ENCODE measurements at regions of chr22 and their contacts with region 1.

Region 1: DNA sequence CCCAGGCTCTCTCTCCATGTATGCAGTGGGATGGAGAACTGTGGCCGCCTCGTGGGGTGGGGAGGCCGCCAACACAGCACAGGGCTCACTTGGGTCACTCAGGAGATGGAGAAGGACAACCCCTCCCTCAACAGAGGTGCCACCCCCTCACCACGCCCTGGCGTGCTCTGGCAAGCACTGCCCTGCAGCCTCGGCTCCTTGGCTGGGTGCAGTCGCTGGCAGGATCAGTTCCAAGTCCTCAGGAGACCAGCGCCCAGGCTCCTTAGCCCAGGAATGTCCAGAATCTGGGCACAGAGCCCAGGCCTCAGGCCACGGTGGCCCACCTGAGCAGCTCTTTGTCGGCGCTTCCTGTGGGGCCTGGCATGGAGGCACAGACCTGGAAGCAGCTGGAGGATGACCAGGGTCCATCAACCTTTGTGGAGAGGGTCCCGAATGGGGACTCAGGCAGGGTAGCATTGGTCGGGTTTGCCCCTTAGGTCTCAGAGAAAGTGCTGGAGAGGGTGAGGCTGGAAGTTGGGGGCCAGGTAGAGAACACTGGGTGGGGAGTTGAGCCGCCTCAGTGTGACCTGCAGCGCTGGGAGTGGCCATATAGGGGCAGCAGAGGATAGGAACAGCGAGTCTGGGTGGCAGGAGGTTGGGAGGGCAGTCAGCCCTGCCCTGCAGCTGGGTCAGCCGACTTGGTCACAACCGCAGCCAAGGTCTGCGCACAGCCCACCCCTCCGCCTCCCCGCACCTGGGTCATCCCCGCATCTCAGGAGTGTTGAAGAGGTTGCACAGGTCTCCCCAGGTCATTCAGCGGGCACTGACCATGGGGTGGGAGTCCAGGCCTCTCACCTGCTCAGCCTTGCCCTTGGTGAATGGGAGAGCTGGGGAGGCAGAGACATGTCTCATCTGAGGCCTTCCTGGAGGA is 8.2 kb downstream of the SUSD2 start:
- H3K4me3 Mint-ChIP-seq: no peak overlapping the region
- H3K27ac Mint-ChIP-seq: peak overlapping the region; percentile 78
- H3K4me1 Mint-ChIP-seq: peaks cover 41% of the 10 kb centered on the region
- H3K27me3 Mint-ChIP-seq: no peaks in the 10 kb centered on the region

Region 2: DNA sequence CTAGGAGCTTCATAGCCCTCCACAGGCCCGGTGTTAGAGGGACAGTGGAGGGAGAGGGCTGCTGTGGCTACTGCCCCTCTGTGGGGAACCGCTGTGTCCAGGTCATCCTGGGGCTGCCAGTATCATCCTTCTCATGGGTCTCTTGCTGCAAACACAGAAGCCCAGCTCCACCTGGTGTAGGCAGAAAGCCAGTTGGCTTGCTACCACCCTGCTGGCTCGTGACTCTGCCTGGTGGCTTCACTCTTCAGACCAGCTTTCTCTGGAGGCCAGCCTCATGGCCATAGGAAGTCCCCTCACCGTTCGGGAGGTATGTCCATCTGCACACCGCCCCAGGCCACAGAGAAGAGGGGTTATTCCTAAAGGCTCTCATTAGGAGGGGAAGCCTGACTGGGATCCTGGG is 27.6 kb before region 1 on chr22:
- intact Hi-C with region 1: no loop called
- H3K4me3 Mint-ChIP-seq: no peak overlapping the region
- H3K27ac Mint-ChIP-seq: peak overlapping the region; percentile 36
- H3K4me1 Mint-ChIP-seq: peaks cover 51% of the 10 kb centered on the region
- H3K27me3 Mint-ChIP-seq: no peaks in the 10 kb centered on the region

Region 3: DNA sequence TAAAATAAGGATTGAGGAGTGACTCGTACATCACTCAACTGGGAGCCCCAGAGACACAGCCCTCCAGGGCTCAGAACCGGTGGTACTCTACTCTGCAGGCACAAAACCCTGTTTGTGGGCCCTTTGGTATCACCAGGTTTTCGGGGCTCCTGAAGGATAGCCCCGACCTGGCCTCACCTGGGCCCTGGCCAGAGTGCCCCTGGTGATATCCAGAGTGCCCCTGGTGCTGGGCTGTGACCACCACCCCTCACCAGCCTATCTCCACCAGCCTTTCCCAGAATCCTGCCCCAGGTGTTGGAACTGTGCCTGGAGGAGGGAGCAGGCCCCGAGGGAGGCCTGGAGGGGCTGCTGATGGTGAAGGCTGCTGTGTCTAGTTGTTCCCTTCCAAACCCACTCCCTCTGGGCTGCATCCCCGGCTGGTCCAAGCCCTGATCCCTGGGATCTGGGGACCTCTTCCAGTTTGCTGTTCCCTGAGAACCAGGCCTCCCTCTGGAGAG is 57.6 kb after region 1 on chr22:
- intact Hi-C with region 1: loop called (anchors 2 kb)
- H3K4me3 Mint-ChIP-seq: peak overlapping the region; percentile 23
- H3K27ac Mint-ChIP-seq: peak overlapping the region; percentile 68
- H3K4me1 Mint-ChIP-seq: peaks cover 52% of the 10 kb centered on the region
- H3K27me3 Mint-ChIP-seq: no peaks in the 10 kb centered on the region

Measured in dendritic cell treated with granulocyte-macrophage colony-stimulating factor and Interleukin-4, amounts not matched to agents 40 ng/mL and 50 ng/mL, for 4 days (primary cell).